ENCODE measurements at regions of chr15 and their contacts with region 1.

Region 1: DNA sequence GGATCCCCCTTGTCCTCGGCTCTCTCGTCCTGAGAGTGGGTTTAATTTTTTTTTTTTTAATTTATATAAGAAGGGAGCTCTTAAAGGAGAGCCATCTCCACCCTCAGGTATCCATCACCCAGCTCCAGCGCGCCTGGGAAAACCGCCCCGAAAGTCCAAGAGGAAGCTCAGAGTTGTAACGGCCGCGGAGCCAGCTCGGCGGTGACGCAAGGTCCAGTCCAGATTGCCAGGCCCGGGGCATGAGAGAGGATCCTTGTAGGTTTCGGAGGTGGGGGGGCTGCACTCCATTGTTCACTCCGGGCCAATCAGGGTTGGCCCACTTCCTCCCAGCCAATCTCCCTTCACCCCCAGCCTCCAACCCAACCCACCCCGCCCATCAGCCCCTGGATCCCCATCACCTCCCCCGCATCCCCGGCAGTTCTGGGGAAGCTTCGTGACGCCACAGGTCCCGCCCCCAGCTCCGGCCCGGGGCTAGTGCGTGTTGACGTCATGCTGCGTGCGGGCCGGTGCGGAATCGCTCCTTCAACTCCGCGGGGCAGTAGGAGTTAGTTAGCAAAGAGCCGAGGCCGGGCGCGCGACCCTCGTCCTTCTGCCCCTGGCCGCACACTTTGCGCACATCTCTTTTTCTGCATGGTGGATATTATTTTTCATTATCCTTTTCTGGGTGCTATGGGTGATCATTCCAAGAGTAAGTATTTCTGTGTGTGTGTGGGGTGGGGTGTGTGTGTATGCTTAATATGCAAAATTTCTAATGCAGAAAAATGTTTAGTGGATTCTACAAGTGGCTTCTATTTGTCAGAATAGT is at the start of gene ISL2:
- DNase-seq: peak; percentile 89 to 97
- H3K4me3 ChIP-seq: peak within 1 kb of the TSS; percentile 41 to 63 (median 51)
- H3K27ac ChIP-seq: no peak within 1 kb of the TSS
- H3K4me1 ChIP-seq: peaks cover 0 to 35% (median 23%) of the 10 kb centered on the region in 4 experiments; a peak in 6 of 7 replicates
- H3K27me3 ChIP-seq: peaks cover 43 to 76% (median 67%) of the 10 kb centered on the region in 4 experiments
- CTCF ChIP-seq: no peak
- EP300 ChIP-seq: 0 out of 3 replicates have a peak, but pooled peaks of 1 of the 2 experiments have one; percentile 35
- POLR2A ChIP-seq: peak in 1 of 2 experiments; percentile 83; a peak in 2 of 3 replicates
- RAD21 ChIP-seq: no peak
- total RNA-seq, gene ISL2: 0.33 and 0.99 TPM in 2 replicates

Region 2: GRCh38 chr15:76150971-76151598 is 185.4 kb before region 1 on chr15:
- CTCF ChIA-PET with region 1: interaction called, 20 read pairs
- POLR2A ChIA-PET with region 1: no interaction called
- DNase-seq: peak; percentile 85 to 96
- H3K4me3 ChIP-seq: peak overlapping the region in 3 of 4 experiments; percentile 8 to 25 (median 23); a peak in 1 of 8 replicates
- H3K27ac ChIP-seq: no peak overlapping the region
- H3K4me1 ChIP-seq: peaks cover 0 to 26% (median 21%) of the 10 kb centered on the region in 4 experiments; a peak in 6 of 7 replicates
- H3K27me3 ChIP-seq: no peaks in the 10 kb centered on the region
- CTCF ChIP-seq: peak; percentile 90 to 91 (median 91)
- EP300 ChIP-seq: no peak
- POLR2A ChIP-seq: no peak
- RAD21 ChIP-seq: peak; percentile 72 to 82

Region 3: DNA sequence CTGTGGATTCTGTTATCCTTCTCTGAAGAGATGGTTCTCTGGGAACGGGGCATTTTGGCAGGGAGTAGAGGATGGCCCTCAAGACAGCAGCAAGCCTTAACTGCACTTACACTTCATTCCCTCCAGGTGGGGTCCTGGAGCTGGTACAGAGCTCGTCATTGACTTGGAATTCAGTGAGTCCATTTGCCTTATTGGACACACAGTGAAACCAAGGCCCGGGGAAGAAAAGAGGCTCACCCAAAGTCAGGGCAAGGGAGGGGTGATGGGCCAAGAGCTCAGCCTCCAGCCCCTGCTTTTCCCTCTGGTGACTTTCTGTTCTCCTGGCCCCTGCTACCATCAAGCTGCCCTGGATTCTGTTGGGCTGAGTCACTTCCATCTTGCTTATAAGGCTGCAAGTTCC is 150.7 kb before region 1 on chr15:
- CTCF ChIA-PET with region 1: interaction called, 130 read pairs
- POLR2A ChIA-PET with region 1: interaction called, 18 read pairs
- DNase-seq: peak; percentile 54 to 65
- H3K4me3 ChIP-seq: no peak overlapping the region
- H3K27ac ChIP-seq: no peak overlapping the region
- H3K4me1 ChIP-seq: peaks cover 0 to 2% (median 0%) of the 10 kb centered on the region in 4 experiments; a peak in 2 of 7 replicates
- H3K27me3 ChIP-seq: peaks cover 0 to 6% (median 4%) of the 10 kb centered on the region in 4 experiments; a peak in 3 of 7 replicates
- CTCF ChIP-seq: peak; percentile 74 to 79 (median 76)
- EP300 ChIP-seq: no peak
- POLR2A ChIP-seq: no peak
- RAD21 ChIP-seq: peak; percentile 75 to 81

Region 4: DNA sequence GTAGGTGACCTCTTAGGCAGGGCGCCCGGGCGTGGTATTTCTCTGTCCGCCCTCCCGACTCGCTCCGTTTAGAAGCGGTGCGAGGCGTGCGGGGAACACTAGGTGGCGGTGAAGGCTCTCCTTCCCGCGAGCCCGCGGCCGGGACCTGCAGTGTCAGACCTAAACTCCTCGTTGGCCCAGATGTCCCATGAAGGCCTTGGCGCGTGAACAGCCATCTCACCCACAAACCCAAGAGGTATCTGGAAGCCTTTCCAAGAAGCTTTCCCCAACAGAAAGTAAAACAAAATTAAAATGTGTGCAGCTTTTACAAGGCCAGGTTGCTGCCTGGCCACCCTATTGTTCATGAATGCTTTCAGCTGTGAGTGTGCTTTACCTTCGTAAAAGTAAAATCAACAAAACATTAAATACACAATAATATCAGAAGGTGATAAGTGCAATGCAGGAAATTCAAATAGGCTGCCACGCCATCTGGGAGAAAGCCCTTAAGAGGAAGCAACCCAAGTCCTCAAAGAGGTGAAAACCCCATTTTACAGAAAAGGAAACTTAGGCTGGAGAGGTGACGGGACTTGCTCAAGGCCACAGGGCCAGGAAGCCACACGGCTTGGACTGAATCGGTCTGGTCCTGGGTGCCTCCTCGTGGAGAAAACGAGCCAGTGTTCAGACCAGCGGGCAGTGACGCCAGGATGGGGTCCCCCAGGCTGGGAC is 145.5 kb before region 1 on chr15:
- CTCF ChIA-PET with region 1: interaction called, 130 read pairs
- POLR2A ChIA-PET with region 1: interaction called, 18 read pairs
- DNase-seq: peak; percentile 61 to 91
- H3K4me3 ChIP-seq: no peak overlapping the region
- H3K27ac ChIP-seq: no peak overlapping the region
- H3K4me1 ChIP-seq: peaks cover 0 to 2% (median 0%) of the 10 kb centered on the region in 4 experiments; a peak in 2 of 7 replicates
- H3K27me3 ChIP-seq: peaks cover 0 to 9% (median 7%) of the 10 kb centered on the region in 4 experiments; a peak in 4 of 7 replicates
- CTCF ChIP-seq: peak; percentile 89 to 94 (median 93)
- EP300 ChIP-seq: no peak
- POLR2A ChIP-seq: no peak
- RAD21 ChIP-seq: peak; percentile 94 to 96

Region 5: GRCh38 chr15:76235186-76235826 is 101.2 kb before region 1 on chr15:
- CTCF ChIA-PET with region 1: interaction called, 55 read pairs
- POLR2A ChIA-PET with region 1: interaction called, 3 read pairs
- DNase-seq: no peak
- H3K4me3 ChIP-seq: no peak overlapping the region
- H3K27ac ChIP-seq: no peak overlapping the region
- H3K4me1 ChIP-seq: peaks cover 0 to 8% (median 5%) of the 10 kb centered on the region in 4 experiments; a peak in 6 of 7 replicates
- H3K27me3 ChIP-seq: no peaks in the 10 kb centered on the region
- CTCF ChIP-seq: peak in 2 of 3 experiments; percentile 22 to 29; a peak in 2 of 4 replicates
- EP300 ChIP-seq: no peak
- POLR2A ChIP-seq: no peak
- RAD21 ChIP-seq: peak; percentile 56 to 59

Region 6: GRCh38 chr15:76274226-76274625 is 62.2 kb before region 1 on chr15:
- CTCF ChIA-PET with region 1: no interaction called
- POLR2A ChIA-PET with region 1: no interaction called
- DNase-seq: no peak
- H3K4me3 ChIP-seq: no peak overlapping the region
- H3K27ac ChIP-seq: no peak overlapping the region
- H3K4me1 ChIP-seq: no peaks in the 10 kb centered on the region
- H3K27me3 ChIP-seq: no peaks in the 10 kb centered on the region
- CTCF ChIP-seq: no peak
- EP300 ChIP-seq: no peak
- POLR2A ChIP-seq: no peak
- RAD21 ChIP-seq: no peak

Region 7: DNA sequence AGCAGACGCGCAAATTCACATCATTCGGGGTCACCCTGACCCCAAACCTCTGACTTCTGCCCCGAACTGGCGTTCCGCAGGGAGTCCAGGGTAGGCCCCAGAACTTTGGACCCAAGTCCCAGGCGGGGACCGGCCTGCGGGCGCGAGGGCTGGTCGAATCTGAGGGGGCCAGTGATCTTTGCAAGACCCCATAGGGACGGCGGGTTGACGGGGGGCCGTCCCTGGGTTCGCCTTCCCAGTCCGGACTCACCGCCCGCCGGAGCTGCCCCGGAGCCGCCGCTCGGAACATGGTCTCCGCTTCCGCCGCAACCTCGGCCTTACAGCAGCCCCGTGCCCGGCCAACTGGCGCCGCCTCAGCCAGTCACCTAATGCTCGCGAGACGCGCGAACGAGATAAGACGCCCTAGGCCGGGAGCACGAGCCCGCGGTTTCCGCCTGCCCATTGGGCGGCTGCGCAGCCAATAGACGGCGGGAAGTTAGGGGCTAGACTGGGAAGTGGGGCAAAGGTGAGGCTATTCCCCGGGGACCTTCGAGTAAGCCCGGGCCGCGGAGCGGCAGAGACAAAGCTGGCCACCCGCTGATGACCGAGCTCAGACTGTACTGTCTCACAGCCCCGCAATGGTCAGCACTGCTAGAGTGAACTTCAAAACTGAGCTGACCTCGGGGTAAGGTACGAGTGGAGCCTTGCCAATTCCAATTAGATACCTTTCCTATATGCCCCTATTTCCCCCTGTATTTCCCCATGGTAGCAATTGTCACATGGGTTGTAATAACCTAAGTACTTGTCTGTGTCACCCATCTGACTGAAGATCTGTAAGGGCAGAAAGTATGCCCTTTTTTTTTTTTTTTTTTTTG is 25.1 kb before region 1 on chr15 and contains the start of gene ETFA:
- CTCF ChIA-PET with region 1: interaction called, 39 read pairs
- POLR2A ChIA-PET with region 1: interaction called, 11 read pairs
- DNase-seq: peak; percentile 89 to 97
- H3K4me3 ChIP-seq: peak within 1 kb of the TSS; percentile 73 to 89 (median 86)
- H3K27ac ChIP-seq: peak within 1 kb of the TSS; percentile 55
- H3K4me1 ChIP-seq: peaks cover 0 to 3% (median 0%) of the 10 kb centered on the region in 4 experiments; a peak in 1 of 7 replicates
- H3K27me3 ChIP-seq: no peaks in the 10 kb centered on the region; a peak in 1 of 7 replicates
- CTCF ChIP-seq: no peak
- EP300 ChIP-seq: no peak
- POLR2A ChIP-seq: peak; percentile 82 to 95
- RAD21 ChIP-seq: no peak
- total RNA-seq, gene ETFA: 90.0 TPM in 2 replicates

Region 8: DNA sequence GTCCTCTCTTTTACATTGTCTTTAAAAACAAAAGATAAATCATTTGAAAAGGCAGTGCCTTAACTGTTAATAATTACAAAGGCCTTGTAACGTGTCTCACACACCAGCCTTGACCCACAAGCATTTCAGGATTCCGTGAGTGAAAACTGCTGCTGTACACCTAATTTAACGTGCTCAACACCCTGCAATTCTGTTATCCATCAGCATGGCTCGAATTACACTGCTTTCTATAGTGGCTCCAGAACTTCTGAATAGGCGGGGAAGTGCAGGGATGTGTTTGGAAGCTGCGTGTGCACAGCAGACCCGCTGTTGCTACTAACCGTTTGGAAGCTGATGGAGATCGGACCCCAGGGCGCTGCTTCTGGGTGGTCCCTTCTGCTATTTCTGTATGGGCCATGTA is 15.3 kb before region 1 on chr15:
- CTCF ChIA-PET with region 1: interaction called, 39 read pairs
- POLR2A ChIA-PET with region 1: interaction called, 4 read pairs
- DNase-seq: no peak
- H3K4me3 ChIP-seq: no peak overlapping the region
- H3K27ac ChIP-seq: no peak overlapping the region
- H3K4me1 ChIP-seq: peaks cover 0 to 3% (median 0%) of the 10 kb centered on the region in 4 experiments; a peak in 2 of 7 replicates
- H3K27me3 ChIP-seq: no peaks in the 10 kb centered on the region
- CTCF ChIP-seq: no peak
- EP300 ChIP-seq: no peak
- POLR2A ChIP-seq: no peak
- RAD21 ChIP-seq: no peak